Posterior vena cava (tissue), 2 donors: ENCODE measurements at regions of chr1 and their contacts with region 1.

Region 1: DNA sequence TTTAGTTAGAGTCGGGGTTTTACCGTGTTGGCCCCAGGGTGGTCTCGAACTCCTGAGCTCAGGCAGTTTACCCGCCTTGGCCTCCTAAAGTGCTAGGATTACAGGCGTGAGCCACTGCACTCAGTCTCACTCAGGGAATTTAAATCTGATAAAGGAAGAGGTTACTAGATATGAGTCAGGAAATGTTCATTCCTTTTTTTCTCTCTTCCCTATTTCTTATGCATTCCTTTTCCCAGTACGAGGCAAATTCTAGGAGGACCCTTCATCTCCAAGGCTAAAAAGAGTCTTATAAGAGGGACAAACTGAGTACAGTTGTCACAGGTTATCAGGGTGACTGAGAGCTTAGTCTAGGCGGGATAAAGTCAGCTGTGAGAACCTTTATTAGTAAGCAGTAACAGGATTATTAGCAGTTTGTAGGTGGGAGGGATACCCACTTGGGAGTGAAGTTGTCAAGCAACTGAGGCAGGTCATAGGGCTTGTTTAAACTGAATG is 9.1 kb downstream of the MACF1 start:
- DNase-seq: no peak

Region 2: DNA sequence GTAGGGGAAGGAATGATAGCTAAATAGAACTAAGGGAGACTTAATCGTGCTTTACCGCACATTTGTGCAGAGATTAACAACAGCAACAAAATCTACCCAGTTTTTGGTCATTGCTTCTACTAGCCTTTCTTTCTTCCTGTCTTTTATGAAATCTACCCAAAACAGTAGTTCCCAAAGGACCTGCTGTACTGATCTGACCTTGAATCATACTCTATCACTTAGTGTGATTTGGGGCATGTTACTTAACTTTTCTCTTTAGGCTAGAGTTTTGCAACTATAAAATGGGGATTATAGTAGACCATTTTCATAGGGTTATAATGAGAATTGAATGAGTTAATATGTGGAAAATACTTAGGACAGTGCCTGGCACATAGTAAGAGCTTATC is 39.6 kb before region 1 on chr1:
- intact Hi-C with region 1: loop called in 1 of 2 experiments (anchors 1 kb)
- DNase-seq: no peak

Region 3: DNA sequence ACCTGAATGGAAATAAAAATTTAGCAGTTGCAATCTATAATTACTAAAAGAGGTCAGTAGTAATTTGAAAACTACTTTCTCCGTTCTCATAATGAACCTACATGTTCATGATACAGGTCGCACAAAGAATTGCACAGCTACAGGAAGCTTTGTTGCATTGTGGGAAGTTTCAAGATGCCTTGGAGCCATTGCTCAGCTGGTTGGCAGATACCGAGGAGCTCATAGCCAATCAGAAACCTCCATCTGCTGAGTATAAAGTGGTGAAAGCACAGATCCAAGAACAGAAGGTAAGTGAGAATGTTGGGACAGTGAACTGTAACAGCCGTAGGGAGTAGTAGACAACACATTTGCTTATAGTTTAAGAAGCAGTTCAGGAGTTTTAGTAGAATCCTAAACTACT is 209.1 kb after region 1 on chr1:
- intact Hi-C with region 1: no loop called
- DNase-seq: no peak